Right ventricle myocardium superior (tissue), 1 donor: ENCODE measurements at regions of chr14 and their contacts with region 1.

Region 1: GRCh38 chr14:93655078-93655750 is 133.1 kb downstream of the PRIMA1 start:
- DNase-seq: no peak
- ATAC-seq: peak; percentile 62

Region 2: DNA sequence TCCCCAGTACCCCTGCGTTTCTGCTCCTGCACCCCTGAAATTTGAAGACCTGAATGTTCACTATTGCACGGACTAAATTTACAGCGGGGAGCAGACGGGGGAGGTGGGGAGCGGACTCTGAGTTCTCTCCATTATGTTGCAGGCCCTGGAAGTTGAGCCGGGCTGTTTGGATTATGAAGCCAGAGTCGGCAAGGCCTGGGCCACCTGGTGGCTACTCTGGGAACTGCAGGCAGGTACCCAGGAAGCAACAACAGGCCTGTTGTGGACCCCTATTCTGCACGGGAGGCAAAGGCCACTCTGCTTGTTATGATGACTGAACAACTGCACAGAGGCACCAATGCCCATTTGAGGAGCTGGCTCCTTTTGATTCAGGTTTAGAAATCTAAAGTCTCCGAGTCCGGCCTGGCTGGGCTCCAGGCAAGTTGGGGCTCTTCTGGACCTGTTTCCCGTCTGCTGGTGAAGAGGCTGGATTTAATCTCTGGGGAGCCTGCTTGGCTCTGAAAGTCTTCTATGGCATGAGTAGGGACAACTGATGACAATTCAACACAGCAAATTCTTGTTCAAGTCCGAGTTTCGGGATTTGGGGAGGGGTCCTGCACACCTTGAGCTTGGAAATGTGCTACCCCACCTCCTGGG is 237.8 kb after region 1 on chr14:
- intact Hi-C with region 1: loop called (anchors 1 kb)
- DNase-seq: peak; percentile 85
- ATAC-seq: peak; percentile 70